A549 (cell line): ENCODE measurements at regions of chr16 and their contacts with region 1.

Region 1: DNA sequence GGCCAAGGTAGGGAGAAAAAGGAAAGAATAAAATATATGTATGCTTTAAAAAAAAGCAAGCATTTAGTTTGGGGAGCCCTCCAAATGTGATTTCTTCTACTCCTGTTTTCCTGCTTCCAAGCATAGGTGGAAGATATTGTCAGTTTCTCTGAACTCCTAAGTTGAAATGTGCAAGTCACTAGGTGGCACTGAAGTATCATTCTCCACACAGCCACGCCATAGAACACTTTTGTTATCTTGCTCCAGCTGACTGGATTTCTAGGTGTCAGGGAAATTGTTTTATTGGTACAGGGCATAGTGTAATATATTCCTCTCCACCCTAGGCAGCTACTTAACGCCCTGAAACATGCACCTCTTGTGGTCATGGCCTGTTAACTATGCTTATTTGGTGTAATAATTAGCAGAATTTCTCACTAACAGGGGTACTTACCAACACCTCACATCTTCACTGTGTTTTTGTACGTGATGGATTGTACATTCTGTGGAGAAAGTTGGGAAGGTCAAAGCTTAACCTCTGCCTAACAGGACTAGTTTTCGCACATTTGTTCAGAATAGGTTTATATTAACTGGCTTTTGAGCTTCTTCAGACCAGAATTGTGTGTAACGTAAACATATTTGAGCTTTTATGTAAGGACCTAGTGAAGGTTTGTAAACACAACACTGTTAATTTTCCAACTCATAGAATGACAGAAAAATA is 69.3 kb downstream of the FTO start:
- DNase-seq: peak; percentile 51 to 83
- ATAC-seq: peak; percentile 67 to 71
- H3K4me3 ChIP-seq: no peak overlapping the region
- H3K27ac ChIP-seq: peak overlapping the region; percentile 72 to 80; a peak in 5 of 6 replicates
- H3K4me1 ChIP-seq: peaks cover 79% of the 10 kb centered on the region
- CTCF ChIP-seq: peak; percentile 86
- EP300 ChIP-seq: no peak
- POLR2A ChIP-seq: no peak
- RAD21 ChIP-seq: peak; percentile 95 to 96

Region 2: GRCh38 chr16:53743149-53743566 is 30.1 kb before region 1 on chr16:
- CTCF ChIA-PET with region 1: interaction called, 23 read pairs
- POLR2A ChIA-PET with region 1: no interaction called
- DNase-seq: peak in 1 of 2 experiments; percentile 70
- ATAC-seq: peak; percentile 74 to 86; a peak in 4 of 6 replicates
- H3K4me3 ChIP-seq: no peak overlapping the region
- H3K27ac ChIP-seq: no peak overlapping the region
- H3K4me1 ChIP-seq: peaks cover 30% of the 10 kb centered on the region
- CTCF ChIP-seq: peak; percentile 74
- EP300 ChIP-seq: no peak
- POLR2A ChIP-seq: no peak
- RAD21 ChIP-seq: peak; percentile 50 to 60

Region 3: DNA sequence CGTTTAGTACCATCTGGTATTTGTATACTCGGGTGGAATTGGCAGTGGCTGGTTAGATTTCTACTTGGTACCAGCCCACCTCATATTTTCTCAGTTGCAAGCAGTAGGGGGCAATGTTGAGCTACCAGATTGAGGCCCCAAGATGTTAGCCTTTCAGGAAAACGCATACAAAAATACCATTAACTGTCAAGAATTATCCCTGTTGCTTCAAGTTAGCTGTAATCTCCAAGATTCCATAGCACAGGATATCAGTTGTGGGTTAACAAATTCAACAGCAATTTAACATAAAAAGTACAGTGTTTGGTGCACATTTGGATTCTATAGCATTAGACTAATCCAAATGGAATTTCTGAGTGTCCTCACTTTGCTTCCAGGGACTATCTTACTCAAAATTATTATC is 118.9 kb after region 1 on chr16:
- CTCF ChIA-PET with region 1: interaction called, 10 read pairs
- POLR2A ChIA-PET with region 1: no interaction called
- DNase-seq: peak; percentile 24 to 62
- ATAC-seq: peak; percentile 71 to 90; a peak in 4 of 6 replicates
- H3K4me3 ChIP-seq: no peak overlapping the region
- H3K27ac ChIP-seq: peak overlapping the region in 1 of 2 experiments; percentile 42; a peak in 1 of 6 replicates
- H3K4me1 ChIP-seq: peaks cover 30% of the 10 kb centered on the region
- CTCF ChIP-seq: peak; percentile 82
- EP300 ChIP-seq: no peak
- POLR2A ChIP-seq: no peak
- RAD21 ChIP-seq: peak; percentile 81 to 86

Region 4: DNA sequence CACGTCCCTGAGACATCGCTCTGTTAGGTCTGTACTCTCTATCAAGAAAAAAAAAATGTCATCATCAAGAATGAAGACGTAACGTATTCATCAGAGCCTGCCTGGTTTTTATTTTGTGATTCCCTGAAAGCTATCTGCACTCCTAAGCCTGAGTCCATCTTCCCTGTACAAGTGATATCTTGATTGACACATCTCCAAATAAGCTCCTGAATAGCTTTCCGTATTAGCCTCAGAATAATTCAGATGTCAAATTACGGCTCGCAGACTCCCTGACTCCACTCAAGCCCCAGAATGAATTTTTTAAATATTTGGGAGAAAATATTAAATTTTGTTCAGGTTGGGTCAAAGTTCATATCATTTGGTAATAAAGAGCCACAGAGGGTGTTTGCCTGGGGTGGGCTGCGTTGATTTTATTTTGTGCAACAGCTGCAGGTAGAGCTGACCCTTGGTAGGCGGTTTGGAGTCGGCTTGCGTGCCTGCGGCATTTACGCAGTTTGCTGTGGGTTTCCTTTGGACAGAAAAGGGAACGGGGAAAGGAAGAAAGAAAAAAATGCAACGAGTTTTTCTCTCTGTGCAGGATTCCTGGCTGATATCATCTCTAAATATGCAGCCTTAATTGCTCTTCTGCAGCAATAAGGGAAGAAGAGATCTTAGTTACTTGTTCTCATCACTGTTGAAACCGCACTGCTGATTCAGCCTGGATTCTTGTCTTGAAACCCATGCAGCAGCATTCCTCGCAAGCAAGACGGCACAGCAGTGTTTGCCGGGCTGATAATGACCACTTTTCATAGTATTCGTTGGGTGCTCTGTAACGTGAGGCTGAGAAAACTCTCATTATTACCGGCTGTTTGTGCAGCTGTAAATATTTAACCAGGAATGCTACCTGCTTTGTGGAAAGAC is 398.6 kb after region 1 on chr16:
- CTCF ChIA-PET with region 1: no interaction called
- POLR2A ChIA-PET with region 1: no interaction called
- DNase-seq: no peak
- ATAC-seq: no peak
- H3K4me3 ChIP-seq: no peak overlapping the region
- H3K27ac ChIP-seq: no peak overlapping the region
- H3K4me1 ChIP-seq: peaks cover 8% of the 10 kb centered on the region; the same call in 1 of the 3 replicates
- CTCF ChIP-seq: no peak
- EP300 ChIP-seq: no peak
- POLR2A ChIP-seq: no peak
- RAD21 ChIP-seq: no peak

Region 5: DNA sequence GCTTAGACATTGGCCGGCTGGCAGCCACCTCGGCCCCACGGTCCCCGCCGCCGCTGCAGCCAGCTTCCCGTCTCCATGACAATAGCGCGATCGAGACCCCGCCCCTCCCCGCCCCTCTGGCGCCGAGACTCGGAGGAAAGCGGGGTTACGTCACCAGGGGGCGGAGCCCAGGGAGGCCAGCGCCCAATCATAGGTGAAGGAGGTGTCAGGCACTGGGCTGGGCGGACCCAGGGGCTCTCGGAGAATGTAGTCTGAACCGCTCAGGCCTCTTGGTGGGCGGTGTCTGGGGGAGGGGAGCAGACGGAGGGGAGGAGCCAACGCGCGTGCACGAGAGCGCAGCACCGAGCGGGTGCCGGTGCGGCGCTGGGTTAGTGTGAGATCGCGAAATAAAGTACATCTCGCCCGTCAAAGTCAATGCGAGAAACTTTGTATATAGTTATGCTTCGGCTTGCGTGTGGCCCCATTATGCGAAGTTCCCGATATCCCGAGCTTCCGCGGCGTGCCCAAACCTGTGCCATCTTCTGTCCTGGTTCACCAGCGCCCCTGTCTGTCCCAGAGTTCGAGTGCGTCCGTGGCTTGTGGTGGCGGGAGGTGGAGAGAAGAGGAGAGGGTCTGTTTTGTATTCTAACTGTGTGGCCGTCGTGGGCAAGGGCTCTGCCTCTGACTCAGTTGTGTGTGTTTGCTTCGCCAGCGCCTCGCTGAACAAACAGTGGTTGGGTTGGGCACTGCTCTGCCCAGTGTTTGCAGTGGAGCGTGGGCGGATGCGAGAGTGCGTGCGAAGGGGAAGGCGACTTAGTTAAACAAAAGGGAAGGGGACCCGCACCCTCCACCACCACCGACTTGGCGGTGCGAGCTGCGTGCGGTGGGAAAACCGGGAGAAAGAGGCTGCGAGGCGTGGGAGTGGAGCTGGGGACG is 1156.0 kb after region 1 on chr16:
- CTCF ChIA-PET with region 1: interaction called, 7 read pairs
- POLR2A ChIA-PET with region 1: interaction called, 14 read pairs
- DNase-seq: peak; percentile 86 to 98
- ATAC-seq: peak; percentile 65 to 90
- H3K4me3 ChIP-seq: peak overlapping the region; percentile 79
- H3K27ac ChIP-seq: peak overlapping the region; percentile 96 to 99
- H3K4me1 ChIP-seq: peaks cover 22% of the 10 kb centered on the region
- CTCF ChIP-seq: peak; percentile 24; the same call in 2 of the 3 replicates
- EP300 ChIP-seq: no peak
- POLR2A ChIP-seq: peak; percentile 33; the same call in 1 of the 2 replicates
- RAD21 ChIP-seq: peak; percentile 37 to 38; a peak in 4 of 5 replicates

Region 6: DNA sequence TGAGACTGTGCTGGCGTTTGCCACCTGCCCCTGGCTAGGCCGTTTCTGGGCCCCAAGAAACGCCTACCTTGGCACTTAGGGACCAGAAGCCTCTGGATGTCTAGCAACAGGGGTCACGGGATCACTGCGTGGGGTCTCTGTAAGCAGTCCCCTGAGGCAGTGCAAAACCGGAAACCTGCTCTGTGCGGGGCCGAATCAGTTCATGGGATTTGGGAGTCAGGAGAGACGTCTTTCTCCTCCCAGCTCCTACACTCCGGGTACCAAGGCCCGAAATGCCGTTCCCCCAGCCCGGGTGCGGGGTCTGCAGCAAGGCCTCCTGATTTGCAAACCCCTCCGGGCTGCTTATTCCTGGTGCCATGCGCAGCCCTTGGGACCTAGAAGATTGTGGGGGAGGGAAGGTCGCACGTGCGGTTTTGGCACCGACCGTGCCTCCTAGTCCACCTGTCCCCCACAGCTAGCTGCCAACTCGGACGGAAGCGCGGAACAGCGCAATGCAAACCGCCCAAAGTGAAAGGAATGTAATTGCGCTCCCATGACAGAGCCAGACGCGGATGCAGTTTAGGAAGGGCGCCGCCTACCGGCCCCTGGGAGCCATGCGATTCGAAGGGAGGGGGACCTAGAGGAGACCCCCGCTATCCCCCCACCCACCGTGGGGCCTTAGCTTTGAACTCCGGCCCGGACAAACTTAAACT is 1163.8 kb after region 1 on chr16:
- CTCF ChIA-PET with region 1: interaction called, 10 read pairs
- POLR2A ChIA-PET with region 1: no interaction called
- DNase-seq: peak; percentile 50 to 54
- ATAC-seq: peak; percentile 67 to 80
- H3K4me3 ChIP-seq: peak overlapping the region; percentile 57
- H3K27ac ChIP-seq: peak overlapping the region; percentile 54 to 78; a peak in 5 of 6 replicates
- H3K4me1 ChIP-seq: peaks cover 5% of the 10 kb centered on the region; the same call in 1 of the 3 replicates
- CTCF ChIP-seq: peak; percentile 74
- EP300 ChIP-seq: no peak
- POLR2A ChIP-seq: no peak
- RAD21 ChIP-seq: peak; percentile 40 to 60; a peak in 4 of 5 replicates